A549 (cell line): ENCODE measurements at regions of chr22 and their contacts with region 1.

Region 1: DNA sequence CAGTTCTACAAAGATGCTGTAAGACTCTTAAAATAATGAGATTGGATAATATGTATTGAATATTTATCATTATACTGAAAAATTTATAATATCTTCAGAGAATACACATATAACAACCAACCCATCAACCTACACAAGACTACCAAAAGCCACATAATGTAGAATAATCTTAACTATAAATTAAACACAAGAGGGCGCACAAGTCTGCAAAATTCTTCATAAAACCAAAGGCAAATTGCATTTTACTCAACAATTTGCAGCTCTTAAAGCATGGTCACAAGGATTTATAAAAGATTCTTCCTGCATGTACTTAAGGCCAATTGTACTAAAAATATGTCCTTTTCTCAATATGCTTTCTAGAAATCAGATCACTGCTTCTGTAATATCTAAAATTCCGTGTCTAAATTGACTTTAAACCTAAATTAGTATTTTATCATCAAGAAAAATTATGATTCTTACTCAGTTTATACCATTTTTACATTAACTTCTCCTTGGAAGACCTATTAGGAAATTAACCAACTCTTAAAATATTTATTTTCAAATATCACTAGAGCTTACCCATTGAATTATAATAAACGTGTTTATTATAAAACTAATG is 79.0 kb downstream of the TTC28 start:
- DNase-seq: peak; percentile 11 to 48
- ATAC-seq: peak in 1 of 2 experiments; percentile 50; a peak in 3 of 6 replicates
- H3K4me3 ChIP-seq: no peak overlapping the region
- H3K27ac ChIP-seq: no peak overlapping the region
- H3K4me1 ChIP-seq: peaks cover 18% of the 10 kb centered on the region
- CTCF ChIP-seq: peak; percentile 61
- EP300 ChIP-seq: no peak
- POLR2A ChIP-seq: no peak
- RAD21 ChIP-seq: peak; percentile 75 to 82

Region 2: DNA sequence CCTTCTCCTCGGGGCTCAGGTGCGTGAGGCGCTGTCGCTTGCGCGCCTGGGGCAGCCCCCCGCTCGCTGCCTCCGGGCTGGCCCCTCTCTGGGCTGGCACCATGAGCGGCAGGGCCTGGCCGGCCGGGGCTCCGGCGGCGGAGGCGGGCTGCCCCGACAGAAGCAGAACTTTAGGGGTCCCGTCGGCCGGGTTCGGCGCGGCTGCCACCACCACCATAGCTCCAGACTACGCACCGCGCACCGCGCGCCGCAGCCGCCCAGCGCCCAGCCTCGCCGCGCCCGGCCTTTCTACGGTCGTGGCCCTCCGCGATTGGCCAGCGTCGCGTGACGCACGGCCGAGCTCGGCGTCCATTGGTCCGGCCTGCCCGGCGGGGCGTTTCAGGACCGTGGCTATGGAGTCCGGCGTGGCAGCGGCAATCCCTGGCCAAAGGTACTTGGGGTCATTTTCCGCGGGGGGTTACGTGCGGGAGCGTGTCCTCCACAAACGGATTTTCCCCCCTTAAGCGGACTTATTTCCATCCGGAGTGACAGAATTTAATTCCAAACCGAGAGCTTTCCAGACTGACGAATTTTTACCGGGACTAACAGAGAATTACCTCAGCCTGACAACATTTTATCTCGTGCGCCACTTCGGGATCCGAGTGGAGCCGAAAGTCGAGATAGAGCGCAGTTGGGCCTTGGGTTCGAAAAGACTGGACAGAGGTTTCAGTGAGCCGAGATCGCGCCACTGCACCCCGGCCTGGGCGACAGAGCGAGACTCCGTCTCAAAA is 199.8 kb after region 1 on chr22 and contains the start of gene XBP1:
- CTCF ChIA-PET with region 1: interaction called, 13 read pairs
- POLR2A ChIA-PET with region 1: no interaction called
- DNase-seq: peak; percentile 90 to 91
- ATAC-seq: peak; percentile 94 to 97
- H3K4me3 ChIP-seq: peak within 1 kb of the TSS; percentile 72
- H3K27ac ChIP-seq: peak within 1 kb of the TSS; percentile 91 to 100
- H3K4me1 ChIP-seq: peaks cover 35% of the 10 kb centered on the region; the same call in 2 of the 3 replicates
- CTCF ChIP-seq: no peak
- EP300 ChIP-seq: no peak
- POLR2A ChIP-seq: peak; percentile 86
- RAD21 ChIP-seq: no peak
- polyA plus RNA-seq, gene XBP1: 172 and 207 TPM in 2 replicates

Region 3: GRCh38 chr22:28835630-28836189 is 235.1 kb after region 1 on chr22:
- CTCF ChIA-PET with region 1: interaction called, 79 read pairs
- POLR2A ChIA-PET with region 1: no interaction called
- DNase-seq: no peak
- ATAC-seq: no peak
- H3K4me3 ChIP-seq: no peak overlapping the region
- H3K27ac ChIP-seq: no peak overlapping the region
- H3K4me1 ChIP-seq: no peaks in the 10 kb centered on the region
- CTCF ChIP-seq: no peak
- EP300 ChIP-seq: no peak
- POLR2A ChIP-seq: no peak
- RAD21 ChIP-seq: no peak